Aorta (tissue), 5 donors: ENCODE measurements at regions of chr11 and their contacts with region 1.

Region 1: DNA sequence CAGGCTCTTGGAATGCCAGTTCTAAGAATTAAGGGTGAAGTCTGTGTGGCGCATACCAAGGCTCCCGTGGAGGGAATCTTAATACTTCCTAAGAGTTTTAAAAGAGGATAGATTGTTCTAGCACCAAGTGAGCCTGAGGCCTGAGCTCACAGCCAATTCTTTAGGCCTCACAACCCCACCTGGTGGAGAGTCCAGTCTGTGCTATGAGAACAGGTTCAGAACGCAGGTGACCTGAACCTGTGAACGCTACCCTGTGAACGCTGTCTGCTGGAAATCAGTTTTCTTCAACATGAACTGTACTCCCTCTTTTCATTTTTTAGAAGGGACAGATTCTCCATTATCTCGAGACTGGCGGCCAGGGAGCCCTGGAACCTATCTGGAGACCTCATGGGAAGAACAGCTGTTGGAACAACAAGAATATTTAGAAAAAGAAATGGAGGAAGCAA is 43.2 kb upstream of the DLAT start:
- DNase-seq: peak in 1 of 2 donors; percentile 53
- ATAC-seq: no peak
- H3K4me3 ChIP-seq: no peak overlapping the region
- H3K27ac ChIP-seq: no peak overlapping the region
- H3K4me1 ChIP-seq: peaks cover 0 to 4% of the 10 kb centered on the region in 2 donors
- H3K27me3 ChIP-seq: no peaks in the 10 kb centered on the region

Region 2: GRCh38 chr11:111938687-111939160 is 43.3 kb before region 1 on chr11:
- intact Hi-C with region 1: loop called (anchors 2 to 5 kb)
- DNase-seq: no peak
- ATAC-seq: peak; percentile 36
- H3K4me3 ChIP-seq: no peak overlapping the region
- H3K27ac ChIP-seq: peak overlapping the region; percentile 44 to 67
- H3K4me1 ChIP-seq: peaks cover 0 to 2% of the 10 kb centered on the region in 2 donors
- H3K27me3 ChIP-seq: no peaks in the 10 kb centered on the region

Region 3: DNA sequence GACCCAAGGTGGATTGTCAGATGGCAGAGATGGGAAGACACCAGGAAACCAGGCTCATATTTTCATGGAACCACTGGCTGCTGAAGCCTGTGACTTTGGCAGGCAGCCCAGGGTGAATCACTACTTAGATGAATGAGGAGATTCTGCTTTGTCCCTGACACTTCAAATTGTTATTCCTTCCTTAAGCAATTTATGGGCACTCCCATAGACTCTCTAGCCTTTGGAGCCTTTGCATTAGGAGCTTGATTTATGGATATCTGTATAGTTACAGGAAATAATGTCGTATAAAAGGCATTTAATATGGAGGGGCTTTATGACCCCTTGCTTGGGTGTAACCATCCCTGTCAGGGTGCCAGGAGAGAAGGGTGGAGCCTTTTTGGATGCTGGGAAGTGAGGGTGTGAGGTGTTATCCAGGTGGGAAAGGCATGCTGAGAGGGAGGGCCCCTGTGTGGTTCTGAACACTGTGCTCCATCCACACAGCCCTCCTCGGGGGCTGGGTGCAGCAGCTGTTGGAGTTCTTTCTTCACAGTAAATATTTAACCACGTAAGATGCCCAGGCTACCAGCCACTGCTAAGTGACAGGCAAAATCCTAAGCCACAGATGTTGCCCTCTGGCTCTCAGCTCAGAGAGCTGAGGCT is 146.6 kb after region 1 on chr11:
- intact Hi-C with region 1: no loop called
- DNase-seq: peak; percentile 79 to 80
- ATAC-seq: no peak
- H3K4me3 ChIP-seq: no peak overlapping the region
- H3K27ac ChIP-seq: no peak overlapping the region
- H3K4me1 ChIP-seq: no peaks in the 10 kb centered on the region
- H3K27me3 ChIP-seq: no peaks in the 10 kb centered on the region